ENCODE measurements at regions of chr6 and their contacts with region 1.

Region 1: DNA sequence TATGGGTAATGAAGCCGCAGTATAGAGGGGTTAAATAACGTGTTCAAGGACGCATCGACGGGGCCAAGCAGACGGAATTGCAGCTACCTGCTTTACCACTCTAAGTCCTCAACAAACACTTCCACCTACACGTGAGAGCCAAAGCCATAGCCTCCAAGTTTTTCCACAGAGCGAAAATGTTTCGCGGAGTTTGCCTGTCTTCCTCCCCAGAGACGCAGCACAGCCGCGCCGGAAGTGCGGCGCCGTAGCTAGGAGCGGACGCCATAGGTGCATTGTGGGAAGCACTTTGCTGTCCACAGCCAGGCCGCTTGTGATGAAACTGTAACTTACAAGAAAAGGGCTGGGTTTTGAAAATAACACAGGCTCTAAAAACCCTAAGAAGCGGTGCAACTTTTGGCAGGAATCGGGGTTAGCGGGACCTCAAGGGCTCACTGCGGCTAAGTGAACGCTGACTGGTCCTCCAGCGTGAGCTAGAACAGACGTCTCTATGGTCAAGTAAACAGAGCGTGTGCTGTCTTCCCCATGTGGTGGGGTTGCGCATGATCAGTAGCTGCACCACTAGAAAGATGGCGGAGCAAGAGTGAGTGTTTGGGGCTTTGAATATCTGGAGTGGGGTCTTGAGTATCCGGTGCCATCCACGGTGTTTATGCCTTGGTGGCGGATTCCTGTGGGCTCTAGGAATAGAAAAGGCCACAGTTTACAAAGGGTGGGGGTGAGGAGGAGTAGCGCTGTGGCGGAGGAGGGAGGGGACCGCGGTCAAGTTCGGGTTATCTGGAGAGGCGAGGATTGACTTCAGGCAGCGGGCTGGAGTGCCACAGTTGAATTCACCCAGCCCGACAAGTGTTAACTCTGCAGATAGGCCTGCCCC is at the start of gene RPL7L1:
- DNase-seq: peak; percentile 84
- H3K4me3 ChIP-seq: peak within 1 kb of the TSS; percentile 53 to 70
- H3K27ac ChIP-seq: peak within 1 kb of the TSS; percentile 89 to 95
- H3K4me1 ChIP-seq: peaks cover 3% of the 10 kb centered on the region
- H3K27me3 ChIP-seq: no peaks in the 10 kb centered on the region
- CTCF ChIP-seq: peak in 2 of 4 experiments; percentile 25 to 47
- POLR2A ChIP-seq: peak; percentile 54
- total RNA-seq, gene RPL7L1: 79.0 to 79.8 TPM

Region 2: DNA sequence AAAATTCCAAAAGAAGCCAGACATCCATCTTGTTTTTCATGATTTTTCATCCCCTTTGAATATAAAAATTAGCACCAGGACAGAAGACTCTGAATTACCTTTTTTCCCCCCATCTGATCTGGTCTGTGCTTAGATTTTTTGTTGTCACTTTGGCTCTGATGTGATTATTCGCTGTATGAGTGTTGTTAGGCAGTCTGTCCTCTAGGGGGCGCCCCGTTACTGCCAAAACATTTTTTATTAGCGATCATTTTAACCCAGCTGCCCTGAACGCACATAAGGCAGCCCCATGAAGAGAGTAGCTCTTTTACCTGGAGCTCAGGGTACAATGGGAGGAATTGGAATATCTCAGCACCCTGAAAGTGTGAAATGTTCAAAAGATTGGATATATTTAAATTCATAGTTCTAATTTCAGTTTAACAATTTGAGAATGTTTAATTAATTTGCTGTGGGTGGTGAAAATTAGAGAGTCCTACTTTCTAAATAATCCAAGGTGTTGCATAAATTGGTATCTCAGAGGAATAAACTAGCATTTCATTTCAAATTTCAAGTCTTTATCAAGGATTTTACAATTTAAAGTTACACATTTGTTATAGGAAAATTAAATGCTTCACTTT is 218.0 kb before region 1 on chr6:
- intact Hi-C with region 1: loop called (anchors 5 kb)
- DNase-seq: peak; percentile 77
- H3K4me3 ChIP-seq: no peak overlapping the region
- H3K27ac ChIP-seq: no peak overlapping the region
- H3K4me1 ChIP-seq: no peaks in the 10 kb centered on the region
- H3K27me3 ChIP-seq: no peaks in the 10 kb centered on the region
- CTCF ChIP-seq: peak; percentile 71 to 96 (median 88)
- POLR2A ChIP-seq: no peak

Region 3: GRCh38 chr6:42726485-42727086 is 153.0 kb before region 1 on chr6:
- intact Hi-C with region 1: loop called (anchors 2 kb)
- DNase-seq: peak; percentile 80
- H3K4me3 ChIP-seq: peak overlapping the region; percentile 13 to 34
- H3K27ac ChIP-seq: peak overlapping the region; percentile 42 to 57
- H3K4me1 ChIP-seq: no peaks in the 10 kb centered on the region
- H3K27me3 ChIP-seq: no peaks in the 10 kb centered on the region
- CTCF ChIP-seq: peak; percentile 79 to 94 (median 93)
- POLR2A ChIP-seq: no peak

Region 4: GRCh38 chr6:42745707-42746462 is 133.7 kb before region 1 on chr6 and contains the start of gene TBCC:
- intact Hi-C with region 1: loop called (anchors 2 kb)
- DNase-seq: peak; percentile 99
- H3K4me3 ChIP-seq: peak within 1 kb of the TSS; percentile 51 to 81
- H3K27ac ChIP-seq: peak within 1 kb of the TSS; percentile 96 to 97
- H3K4me1 ChIP-seq: peaks cover 8% of the 10 kb centered on the region
- H3K27me3 ChIP-seq: no peaks in the 10 kb centered on the region
- CTCF ChIP-seq: no peak
- POLR2A ChIP-seq: peak; percentile 97
- total RNA-seq, gene TBCC: 43.4 to 59.8 TPM

Region 5: DNA sequence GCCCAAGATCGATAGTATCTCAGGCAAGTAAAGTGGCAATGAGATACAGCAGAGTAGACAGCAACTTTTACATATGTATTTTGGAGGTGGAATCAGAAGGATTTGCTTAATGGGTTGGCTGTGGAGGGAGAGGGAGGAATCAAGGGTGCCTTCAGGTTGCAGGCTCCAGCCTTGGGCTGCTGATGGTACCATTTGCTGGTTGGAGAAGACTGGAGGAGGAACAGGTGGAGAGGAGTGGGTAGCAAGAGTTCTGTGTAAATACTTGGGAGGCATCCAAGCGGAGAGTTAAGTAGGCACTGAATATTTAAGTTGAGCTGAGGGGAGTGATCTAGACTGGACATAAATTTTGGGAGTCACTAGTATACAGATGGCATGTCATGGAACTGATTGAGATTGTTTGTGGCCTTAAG is 92.5 kb before region 1 on chr6:
- intact Hi-C with region 1: loop called (anchors 5 kb)
- DNase-seq: no peak
- H3K4me3 ChIP-seq: no peak overlapping the region
- H3K27ac ChIP-seq: no peak overlapping the region
- H3K4me1 ChIP-seq: no peaks in the 10 kb centered on the region
- H3K27me3 ChIP-seq: no peaks in the 10 kb centered on the region
- CTCF ChIP-seq: no peak
- POLR2A ChIP-seq: no peak

Region 6: GRCh38 chr6:42928986-42929820 is 49.6 kb after region 1 on chr6 and contains the start of gene CNPY3:
- intact Hi-C with region 1: no loop called
- DNase-seq: peak; percentile 94
- H3K4me3 ChIP-seq: peak within 1 kb of the TSS; percentile 65 to 66
- H3K27ac ChIP-seq: peak within 1 kb of the TSS; percentile 92 to 93
- H3K4me1 ChIP-seq: peaks cover 6% of the 10 kb centered on the region
- H3K27me3 ChIP-seq: no peaks in the 10 kb centered on the region
- CTCF ChIP-seq: peak in 3 of 4 experiments; percentile 8 to 11 (median 9)
- POLR2A ChIP-seq: peak; percentile 59
- total RNA-seq, gene CNPY3: 52.3 to 68.5 TPM

Region 7: GRCh38 chr6:43269273-43270007 is 389.8 kb after region 1 on chr6:
- intact Hi-C with region 1: no loop called
- DNase-seq: no peak
- H3K4me3 ChIP-seq: peak overlapping the region; percentile 5 to 21
- H3K27ac ChIP-seq: peak overlapping the region; percentile 13 to 64
- H3K4me1 ChIP-seq: peaks cover 5% of the 10 kb centered on the region
- H3K27me3 ChIP-seq: no peaks in the 10 kb centered on the region
- CTCF ChIP-seq: no peak
- POLR2A ChIP-seq: no peak

Region 8: DNA sequence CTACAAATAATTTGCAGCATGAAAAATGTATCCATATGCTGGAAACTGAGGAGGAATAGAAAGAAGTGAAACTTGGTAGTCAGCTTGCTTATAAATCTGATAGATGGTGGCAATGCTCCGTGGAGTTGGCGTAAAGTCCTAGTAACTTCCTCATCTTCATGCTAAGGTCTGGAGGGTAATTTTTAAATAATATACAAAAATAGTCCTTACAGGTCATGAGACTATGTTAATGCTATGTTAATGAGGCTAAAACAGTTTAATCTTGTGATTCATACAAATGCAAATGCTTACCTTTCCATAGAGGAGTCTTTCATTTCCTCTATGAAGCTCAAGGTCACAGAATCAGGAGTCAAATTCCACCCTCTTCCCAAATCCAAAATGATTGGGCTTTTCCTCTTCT is 438.4 kb after region 1 on chr6:
- intact Hi-C with region 1: no loop called
- DNase-seq: no peak
- H3K4me3 ChIP-seq: no peak overlapping the region
- H3K27ac ChIP-seq: no peak overlapping the region
- H3K4me1 ChIP-seq: no peaks in the 10 kb centered on the region
- H3K27me3 ChIP-seq: no peaks in the 10 kb centered on the region
- CTCF ChIP-seq: no peak
- POLR2A ChIP-seq: no peak

Measured in prostate gland (tissue), 2 donors.